ENCODE measurements at regions of chr15 and their contacts with region 1.

Region 1: DNA sequence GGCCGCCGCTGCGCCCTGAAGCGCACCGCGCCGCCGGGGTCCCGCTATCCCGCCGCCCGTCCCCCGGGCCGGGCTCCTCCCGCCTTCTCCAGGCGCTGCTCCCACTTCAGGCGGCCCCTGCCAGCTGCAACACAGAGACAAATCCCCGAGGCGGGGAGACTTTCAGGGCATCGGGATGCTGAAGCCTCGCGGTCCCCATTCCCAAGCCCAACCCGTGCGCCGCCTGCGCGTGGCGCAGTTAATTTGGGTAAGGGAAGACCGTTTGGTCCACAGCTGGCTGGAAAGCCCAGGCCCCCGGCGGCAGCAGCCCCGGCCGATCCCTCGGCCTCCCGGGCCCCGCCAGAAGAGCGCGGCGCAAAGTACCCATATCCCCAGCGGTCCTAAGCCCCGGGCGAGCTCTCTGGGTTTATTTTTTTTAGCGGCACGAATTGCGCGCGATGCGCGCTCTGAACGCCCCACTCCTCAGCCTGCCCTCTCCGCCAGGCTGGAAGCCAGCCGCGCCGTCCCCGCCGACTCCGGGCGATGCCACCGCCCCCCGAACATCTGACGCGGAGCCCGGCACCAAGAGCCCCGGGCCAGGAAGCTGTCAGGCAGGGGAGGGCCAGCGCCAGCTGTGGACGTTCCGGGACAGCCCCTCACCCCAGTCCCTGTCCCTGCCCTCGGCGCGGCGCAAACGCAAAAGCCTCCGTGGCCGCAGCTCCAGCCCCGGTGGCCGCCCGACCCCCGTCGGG is 517 bp downstream of the FBN1 start:
- DNase-seq: peak; percentile 11
- H3K4me3 Mint-ChIP-seq: no peak overlapping the region
- H3K27ac Mint-ChIP-seq: no peak overlapping the region
- H3K4me1 Mint-ChIP-seq: no peaks in the 10 kb centered on the region
- H3K27me3 Mint-ChIP-seq: peaks cover 29% of the 10 kb centered on the region

Region 2: DNA sequence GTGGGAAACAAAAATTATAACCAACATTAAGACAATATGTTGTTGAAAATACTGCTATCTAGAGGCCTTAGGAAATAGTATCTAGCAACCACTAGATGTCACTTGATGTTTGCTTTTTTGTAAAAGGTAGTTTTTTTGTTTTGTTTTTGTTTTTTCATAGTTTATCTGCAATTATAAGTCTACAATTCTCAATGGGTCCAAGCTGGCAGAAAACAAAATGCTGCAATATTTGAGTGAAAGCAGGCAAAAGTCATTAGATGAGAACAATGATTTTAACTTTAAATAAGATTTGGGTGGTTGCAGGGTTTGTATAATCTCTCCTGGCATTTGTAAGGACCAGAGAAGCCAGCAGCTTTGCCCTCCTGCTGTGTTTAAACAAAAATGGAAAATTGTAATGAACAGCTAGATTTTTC is 286.8 kb before region 1 on chr15:
- CTCF ChIA-PET with region 1: no interaction called
- POLR2A ChIA-PET with region 1: no interaction called
- intact Hi-C with region 1: loop called (anchors 5 kb)
- DNase-seq: no peak
- H3K4me3 Mint-ChIP-seq: no peak overlapping the region
- H3K27ac Mint-ChIP-seq: no peak overlapping the region
- H3K4me1 Mint-ChIP-seq: peaks cover 3% of the 10 kb centered on the region
- H3K27me3 Mint-ChIP-seq: peaks cover under 1% of the 10 kb centered on the region